Mammary epithelial cell (primary cell): ENCODE measurements at regions of chr9 and their contacts with region 1.

Region 1: DNA sequence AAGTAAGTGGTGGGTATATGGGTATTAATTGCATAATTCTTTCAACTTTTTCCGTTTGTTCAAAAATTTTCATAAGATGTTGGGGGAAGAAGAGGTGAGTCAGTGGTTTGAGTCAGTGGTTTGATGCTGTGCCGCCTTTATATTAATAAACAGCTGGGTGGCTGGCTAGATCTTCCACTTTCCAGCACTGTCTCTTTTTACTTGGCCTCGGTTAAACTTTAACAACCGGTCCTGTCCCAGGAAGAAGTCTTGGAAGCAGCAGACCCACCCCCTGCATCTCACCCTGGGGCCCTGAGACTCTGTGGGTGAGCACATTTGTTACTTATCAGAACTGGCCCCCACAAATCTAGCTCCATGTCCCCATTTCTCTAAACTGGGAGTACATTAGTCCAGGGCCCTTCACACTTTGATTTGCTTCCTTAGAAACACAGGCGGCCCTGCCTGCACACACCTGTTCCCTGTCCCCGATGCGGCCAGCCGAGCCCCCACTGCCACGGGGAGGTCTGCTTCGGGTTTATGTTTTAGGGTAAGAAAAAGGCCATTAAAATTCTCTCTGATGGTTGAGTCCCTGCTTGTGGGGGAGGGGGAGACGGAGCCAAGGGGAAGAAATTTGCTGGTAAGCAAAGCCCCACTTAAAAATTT is 90.7 kb downstream of the PTCH1 start:
- DNase-seq: peak; percentile 48
- H3K4me3 ChIP-seq: peak overlapping the region; percentile 48 to 62 (median 58)
- H3K27ac ChIP-seq: peak overlapping the region; percentile 55
- H3K4me1 ChIP-seq: no peaks in the 10 kb centered on the region
- H3K27me3 ChIP-seq: no peaks in the 10 kb centered on the region
- CTCF ChIP-seq: no peak

Region 2: DNA sequence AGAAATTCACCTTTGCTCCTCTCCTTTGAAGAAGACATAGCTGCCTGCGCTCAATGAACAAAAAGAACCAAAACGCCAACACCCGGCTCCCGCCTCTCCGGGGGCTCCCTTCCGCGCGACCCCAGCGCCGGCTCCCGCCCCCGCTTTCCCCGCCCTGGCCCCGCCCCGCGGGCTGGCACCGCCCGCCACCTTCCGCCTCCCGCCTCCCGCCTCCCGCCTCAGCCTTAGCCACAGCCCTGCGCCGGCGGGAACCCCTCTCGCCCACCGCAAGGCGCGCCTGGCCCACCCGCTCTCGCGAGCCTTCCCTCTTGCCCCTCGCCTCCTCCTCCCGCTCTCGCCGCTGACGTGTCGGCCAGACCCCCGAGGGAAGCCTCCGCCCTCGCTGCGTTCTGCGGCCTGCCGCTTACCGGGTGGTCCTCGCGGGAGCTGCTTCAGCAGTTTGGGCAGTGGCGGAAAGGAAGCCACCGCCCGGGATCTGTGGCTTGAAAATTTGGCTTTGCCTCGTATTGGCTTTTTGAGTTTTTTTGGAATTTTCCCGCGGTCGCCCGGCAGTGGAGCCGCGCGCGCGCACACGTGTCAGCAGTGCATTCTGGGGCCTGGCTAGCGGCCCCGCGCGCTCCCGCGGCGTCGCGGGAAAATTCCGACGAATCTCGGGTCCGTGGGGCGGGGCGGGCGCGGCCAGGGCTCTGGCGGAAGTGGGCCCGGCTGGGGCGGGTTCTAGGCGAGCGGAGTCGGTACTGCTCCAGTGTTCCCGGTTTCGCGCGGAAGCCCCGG is 108.7 kb before region 1 on chr9 and contains the start of gene FANCC:
- CTCF ChIA-PET with region 1: no interaction called
- dilution Hi-C with region 1: no loop called
- in situ Hi-C with region 1: no loop called
- intact Hi-C with region 1: loop called (anchors 1 kb)
- DNase-seq: peak; percentile 81
- H3K4me3 ChIP-seq: peak within 1 kb of the TSS; percentile 94 to 100 (median 95)
- H3K27ac ChIP-seq: peak within 1 kb of the TSS; percentile 94
- H3K4me1 ChIP-seq: peaks cover 22% of the 10 kb centered on the region
- H3K27me3 ChIP-seq: no peaks in the 10 kb centered on the region
- CTCF ChIP-seq: no peak
- total RNA-seq, gene FANCC: 4.2 to 12.9 TPM

Region 3: GRCh38 chr9:95409650-95410426 is 16.2 kb before region 1 on chr9:
- CTCF ChIA-PET with region 1: no interaction called
- dilution Hi-C with region 1: no loop called
- in situ Hi-C with region 1: no loop called
- intact Hi-C with region 1: loop called (anchors 1 kb)
- DNase-seq: peak; percentile 48
- H3K4me3 ChIP-seq: no peak overlapping the region
- H3K27ac ChIP-seq: no peak overlapping the region
- H3K4me1 ChIP-seq: peaks cover 6% of the 10 kb centered on the region
- H3K27me3 ChIP-seq: no peaks in the 10 kb centered on the region
- CTCF ChIP-seq: no peak